Activated T-helper 1 cell treated with anti-CD3 and anti-CD28 coated beads, Interleukin-12 subunit alpha, Interleukin-12 subunit beta, Interleukin-2, Interleukin-4 antibody, amounts not matched to agents 30 ng/mL and 10 ng/mL and 1 ng/mL, durations not matched to agents 14 hours and 24 hours and 36 hours (primary cell): ENCODE measurements at regions of chr7 and their contacts with region 1.

Region 1: GRCh38 chr7:118153551-118154177 is 30.3 kb upstream of the LSM8 start:
- DNase-seq: no peak
- H3K4me3 Mint-ChIP-seq: no peak overlapping the region
- H3K27ac Mint-ChIP-seq: no peak overlapping the region
- H3K4me1 Mint-ChIP-seq: no peaks in the 10 kb centered on the region
- H3K27me3 Mint-ChIP-seq: peaks cover 13% of the 10 kb centered on the region

Region 2: GRCh38 chr7:117212969-117213877 is 940.4 kb before region 1 on chr7:
- intact Hi-C with region 1: loop called (anchors 1 kb)
- DNase-seq: peak; percentile 9
- H3K4me3 Mint-ChIP-seq: no peak overlapping the region
- H3K27ac Mint-ChIP-seq: no peak overlapping the region
- H3K4me1 Mint-ChIP-seq: no peaks in the 10 kb centered on the region
- H3K27me3 Mint-ChIP-seq: peaks cover 2% of the 10 kb centered on the region

Region 3: GRCh38 chr7:117399820-117400422 is 753.7 kb before region 1 on chr7:
- intact Hi-C with region 1: loop called (anchors 1 kb)
- DNase-seq: no peak
- H3K4me3 Mint-ChIP-seq: no peak overlapping the region
- H3K27ac Mint-ChIP-seq: no peak overlapping the region
- H3K4me1 Mint-ChIP-seq: no peaks in the 10 kb centered on the region
- H3K27me3 Mint-ChIP-seq: no peaks in the 10 kb centered on the region

Region 4: DNA sequence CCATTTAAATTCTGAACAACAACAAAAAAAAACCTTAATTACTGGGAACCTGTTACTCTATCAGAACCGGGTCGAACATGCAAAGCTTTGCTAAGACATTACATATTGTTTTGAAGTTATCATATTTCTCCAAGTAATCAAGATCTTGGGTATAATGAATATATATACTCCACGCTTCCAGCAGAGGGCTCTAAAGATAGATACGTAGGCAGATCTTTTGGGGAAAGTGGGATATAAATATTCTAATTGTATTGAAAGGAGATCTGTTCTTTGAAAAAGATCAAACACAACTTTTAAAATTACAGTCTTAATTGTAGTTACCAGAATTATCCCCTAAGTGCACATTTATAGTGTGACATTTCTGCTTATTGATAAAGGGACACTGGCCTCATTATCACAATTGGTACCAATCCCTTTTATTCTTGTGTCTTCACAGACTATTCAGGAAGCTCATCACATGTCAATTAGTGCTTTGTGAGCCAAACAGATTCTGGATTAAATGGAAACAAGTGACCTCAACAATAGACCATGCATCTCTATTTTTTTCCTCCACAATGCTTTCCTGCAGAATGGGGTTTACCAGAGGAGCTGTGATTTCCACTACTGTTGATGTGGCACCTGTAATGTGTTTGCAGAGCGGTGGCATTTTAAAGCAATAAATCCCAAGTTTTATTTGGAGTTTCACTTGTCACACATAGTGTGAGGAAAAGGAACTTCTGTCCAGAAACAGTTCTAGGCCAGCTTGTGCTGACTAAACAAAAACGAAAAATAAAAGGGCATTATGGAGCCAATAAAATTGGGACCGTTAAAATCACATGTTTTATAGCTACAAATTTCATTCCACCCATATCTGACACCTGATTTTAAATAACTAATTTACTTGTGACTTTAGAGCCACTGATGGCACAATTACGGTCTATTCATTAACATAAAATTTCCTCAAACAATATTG is 402.8 kb before region 1 on chr7:
- intact Hi-C with region 1: loop called (anchors 1 kb)
- DNase-seq: no peak
- H3K4me3 Mint-ChIP-seq: no peak overlapping the region
- H3K27ac Mint-ChIP-seq: no peak overlapping the region
- H3K4me1 Mint-ChIP-seq: no peaks in the 10 kb centered on the region
- H3K27me3 Mint-ChIP-seq: no peaks in the 10 kb centered on the region

Region 5: GRCh38 chr7:117993377-117994003 is 160.2 kb before region 1 on chr7:
- intact Hi-C with region 1: loop called (anchors 1 kb)
- DNase-seq: no peak
- H3K4me3 Mint-ChIP-seq: no peak overlapping the region
- H3K27ac Mint-ChIP-seq: no peak overlapping the region
- H3K4me1 Mint-ChIP-seq: no peaks in the 10 kb centered on the region
- H3K27me3 Mint-ChIP-seq: no peaks in the 10 kb centered on the region